Mammary epithelial cell (primary cell): ENCODE measurements at regions of chr3 and their contacts with region 1.

Region 1: GRCh38 chr3:71955240-71956068 is 170.5 kb upstream of the PROK2 start:
- DNase-seq: peak; percentile 48
- H3K4me3 ChIP-seq: no peak overlapping the region
- H3K27ac ChIP-seq: no peak overlapping the region
- H3K4me1 ChIP-seq: no peaks in the 10 kb centered on the region
- H3K27me3 ChIP-seq: no peaks in the 10 kb centered on the region
- CTCF ChIP-seq: peak; percentile 65 to 81

Region 2: DNA sequence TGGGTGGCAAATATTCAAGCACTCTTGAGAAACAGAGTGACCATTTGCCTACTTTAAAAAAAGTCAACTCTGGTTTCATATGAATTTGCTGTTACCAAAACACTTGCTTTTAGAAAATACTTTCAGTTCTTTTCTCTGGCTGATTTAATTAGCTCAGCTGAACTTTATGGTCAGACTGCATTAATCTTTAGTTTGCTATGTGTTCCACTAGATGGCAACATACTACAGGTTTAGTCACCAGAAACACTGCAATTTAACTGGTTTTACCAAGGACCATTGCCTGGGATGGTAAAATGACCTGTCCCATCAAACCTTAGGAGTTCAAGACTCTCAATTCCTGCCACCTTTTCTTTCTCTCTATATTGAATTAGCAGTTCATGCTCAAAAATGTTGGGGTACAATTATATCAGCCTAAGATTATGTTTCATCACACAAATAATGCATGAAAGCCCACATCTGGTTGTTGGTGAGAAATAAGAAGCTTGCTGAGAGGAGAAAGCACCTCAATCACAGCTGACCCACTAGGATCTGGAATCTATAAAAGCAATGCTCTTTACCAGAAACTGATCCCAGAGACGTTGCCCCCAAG is 244.5 kb before region 1 on chr3:
- CTCF ChIA-PET with region 1: no interaction called
- dilution Hi-C with region 1: no loop called
- in situ Hi-C with region 1: no loop called
- intact Hi-C with region 1: loop called (anchors 10 kb)
- DNase-seq: peak; percentile 33
- H3K4me3 ChIP-seq: no peak overlapping the region
- H3K27ac ChIP-seq: no peak overlapping the region
- H3K4me1 ChIP-seq: peaks cover 6% of the 10 kb centered on the region
- H3K27me3 ChIP-seq: no peaks in the 10 kb centered on the region
- CTCF ChIP-seq: peak; percentile 63 to 64

Region 3: DNA sequence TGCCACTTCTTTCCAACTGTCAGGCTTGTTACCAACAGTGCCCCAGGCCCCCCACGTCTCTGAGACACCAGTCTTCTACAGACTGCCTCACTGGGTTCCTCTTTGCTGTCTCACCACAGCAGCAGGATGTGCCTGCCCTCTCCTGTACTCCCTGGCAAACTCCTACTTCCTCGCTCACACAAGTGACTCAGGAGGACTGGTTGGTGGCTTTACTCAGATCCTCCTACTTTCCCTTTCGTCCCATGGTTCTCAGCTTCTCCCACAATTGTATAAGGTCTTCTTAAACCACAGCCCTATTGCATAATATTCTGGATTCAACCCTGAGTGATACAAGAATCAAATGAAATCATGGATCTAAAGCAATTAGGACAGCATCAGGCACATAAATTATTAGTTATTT is 76.1 kb after region 1 on chr3:
- CTCF ChIA-PET with region 1: no interaction called
- dilution Hi-C with region 1: no loop called
- in situ Hi-C with region 1: no loop called
- intact Hi-C with region 1: loop called (anchors 5 kb)
- DNase-seq: peak; percentile 79
- H3K4me3 ChIP-seq: no peak overlapping the region
- H3K27ac ChIP-seq: peak overlapping the region; percentile 5
- H3K4me1 ChIP-seq: peaks cover 26% of the 10 kb centered on the region
- H3K27me3 ChIP-seq: no peaks in the 10 kb centered on the region
- CTCF ChIP-seq: peak; percentile 24 to 40

Region 4: GRCh38 chr3:72185549-72186399 is 230.3 kb after region 1 on chr3:
- CTCF ChIA-PET with region 1: no interaction called
- dilution Hi-C with region 1: no loop called
- in situ Hi-C with region 1: no loop called
- intact Hi-C with region 1: loop called (anchors 10 kb)
- DNase-seq: peak; percentile 74
- H3K4me3 ChIP-seq: no peak overlapping the region
- H3K27ac ChIP-seq: no peak overlapping the region
- H3K4me1 ChIP-seq: peaks cover 13% of the 10 kb centered on the region
- H3K27me3 ChIP-seq: no peaks in the 10 kb centered on the region
- CTCF ChIP-seq: no peak

Region 5: DNA sequence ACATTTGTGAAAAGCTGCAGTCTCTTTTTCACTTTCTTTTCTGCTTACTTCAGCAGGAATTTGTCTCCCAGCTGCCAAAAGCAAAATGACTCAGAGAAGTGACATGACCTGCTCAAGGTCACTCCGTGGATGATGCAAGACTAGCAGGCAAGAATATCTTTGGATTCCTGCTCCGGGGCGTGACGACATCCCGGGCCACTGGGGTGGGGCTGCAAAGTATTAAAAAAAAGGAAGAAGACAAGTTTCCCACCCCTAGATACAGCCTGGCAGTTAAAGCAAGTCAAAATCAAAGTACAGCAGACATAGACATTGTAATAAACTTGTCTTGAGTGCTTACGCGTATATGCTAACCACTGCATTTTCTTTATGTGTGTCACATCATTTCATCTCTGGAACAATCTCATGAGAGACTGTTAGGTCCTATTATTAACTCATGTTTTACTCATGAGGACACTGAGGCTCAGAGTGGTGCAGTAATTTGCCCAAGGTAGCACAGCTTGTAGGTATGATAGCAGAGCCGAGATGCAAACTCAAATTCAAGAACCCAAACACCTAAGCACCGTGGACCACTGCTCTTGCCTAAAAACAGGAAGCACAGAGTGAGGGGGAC is 314.7 kb after region 1 on chr3:
- CTCF ChIA-PET with region 1: no interaction called
- dilution Hi-C with region 1: no loop called
- in situ Hi-C with region 1: loop called (anchors 10 to 25 kb)
- intact Hi-C with region 1: loop called (anchors 1 kb)
- DNase-seq: peak; percentile 67
- H3K4me3 ChIP-seq: no peak overlapping the region
- H3K27ac ChIP-seq: no peak overlapping the region
- H3K4me1 ChIP-seq: peaks cover 10% of the 10 kb centered on the region
- H3K27me3 ChIP-seq: peaks cover 4% of the 10 kb centered on the region
- CTCF ChIP-seq: no peak

Region 6: GRCh38 chr3:72665701-72666443 is 710.4 kb after region 1 on chr3:
- CTCF ChIA-PET with region 1: no interaction called
- dilution Hi-C with region 1: no loop called
- in situ Hi-C with region 1: no loop called
- intact Hi-C with region 1: loop called (anchors 10 kb)
- DNase-seq: peak; percentile 21
- H3K4me3 ChIP-seq: no peak overlapping the region
- H3K27ac ChIP-seq: no peak overlapping the region
- H3K4me1 ChIP-seq: peaks cover 6% of the 10 kb centered on the region
- H3K27me3 ChIP-seq: no peaks in the 10 kb centered on the region
- CTCF ChIP-seq: peak; percentile 61 to 65